ENCODE measurements at regions of chr1 and their contacts with region 1.

Region 1: GRCh38 chr1:212368073-212368484 is 46.6 kb downstream of the PACC1 start:
- DNase-seq: peak; percentile 67
- ATAC-seq: peak; percentile 98
- H3K4me3 Mint-ChIP-seq: no peak overlapping the region
- H3K27ac Mint-ChIP-seq: no peak overlapping the region
- H3K4me1 Mint-ChIP-seq: no peaks in the 10 kb centered on the region
- H3K27me3 Mint-ChIP-seq: no peaks in the 10 kb centered on the region

Region 2: DNA sequence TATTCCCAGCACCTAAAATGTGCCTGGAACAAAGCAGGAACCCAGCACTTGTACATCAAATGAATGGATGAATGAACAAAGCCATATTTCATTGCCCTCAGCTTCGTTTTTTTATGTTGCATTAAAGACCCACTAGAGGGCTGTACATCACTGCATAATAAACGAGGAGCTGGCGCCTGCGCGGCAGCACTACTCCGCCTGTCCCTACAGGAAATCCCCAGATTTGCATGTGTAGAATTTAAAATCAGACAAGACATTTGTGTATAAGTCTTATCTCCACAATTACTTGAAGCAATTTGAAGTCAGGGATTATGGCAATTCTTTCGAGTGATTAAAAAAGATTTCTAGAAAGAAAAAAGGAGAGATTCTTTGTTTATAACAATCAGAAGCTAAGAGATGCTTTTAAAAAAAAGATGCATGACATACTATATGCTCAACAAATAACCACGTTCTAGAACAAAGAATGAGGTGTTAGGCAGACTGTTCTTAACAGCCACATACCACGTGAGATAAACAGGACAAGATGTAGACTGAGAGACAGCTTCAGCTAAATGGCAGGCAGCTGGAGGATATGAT is 687.2 kb before region 1 on chr1:
- CTCF ChIA-PET with region 1: interaction called, 7 read pairs
- POLR2A ChIA-PET with region 1: no interaction called
- intact Hi-C with region 1: loop called (anchors 2 to 5 kb)
- DNase-seq: peak; percentile 85
- ATAC-seq: peak; percentile 94
- H3K4me3 Mint-ChIP-seq: no peak overlapping the region
- H3K27ac Mint-ChIP-seq: peak overlapping the region; percentile 71
- H3K4me1 Mint-ChIP-seq: peaks cover 7% of the 10 kb centered on the region
- H3K27me3 Mint-ChIP-seq: no peaks in the 10 kb centered on the region

Region 3: DNA sequence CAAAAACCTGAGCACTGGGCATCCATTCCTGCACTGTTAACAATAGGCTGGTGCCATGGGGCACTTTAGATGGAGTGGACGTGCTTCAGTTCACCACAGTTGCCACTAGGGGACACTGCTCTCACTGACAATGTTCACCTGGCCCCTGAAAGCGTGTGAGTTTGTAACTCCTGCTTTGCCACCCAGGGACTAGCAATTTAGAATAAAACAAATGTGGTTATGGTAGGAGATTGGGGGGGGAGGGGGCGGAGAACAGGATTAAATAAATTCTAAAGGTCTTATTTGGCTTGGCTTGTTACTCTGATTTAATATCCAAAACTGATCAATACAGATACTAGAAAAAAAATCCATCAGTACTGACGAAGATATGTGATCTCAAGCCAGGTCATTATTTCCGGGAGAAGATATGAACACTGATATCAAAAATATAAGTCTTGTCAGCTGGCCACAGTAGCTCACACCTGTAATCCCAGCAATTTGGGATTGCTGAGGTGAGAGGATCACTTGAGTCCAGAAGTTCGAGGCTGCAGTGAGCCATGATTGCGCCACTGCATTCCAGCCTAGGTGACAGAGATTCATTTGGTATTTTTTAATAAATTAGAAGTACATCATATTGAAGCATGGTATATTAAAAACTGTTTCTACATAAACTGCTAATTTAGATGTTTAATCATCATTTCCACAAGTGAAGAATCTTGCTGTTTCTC is 355.9 kb before region 1 on chr1:
- CTCF ChIA-PET with region 1: interaction called, 6 read pairs
- POLR2A ChIA-PET with region 1: no interaction called
- intact Hi-C with region 1: loop called (anchors 1 to 5 kb)
- DNase-seq: peak; percentile 80
- ATAC-seq: peak; percentile 99
- H3K4me3 Mint-ChIP-seq: no peak overlapping the region
- H3K27ac Mint-ChIP-seq: no peak overlapping the region
- H3K4me1 Mint-ChIP-seq: no peaks in the 10 kb centered on the region
- H3K27me3 Mint-ChIP-seq: no peaks in the 10 kb centered on the region

Region 4: DNA sequence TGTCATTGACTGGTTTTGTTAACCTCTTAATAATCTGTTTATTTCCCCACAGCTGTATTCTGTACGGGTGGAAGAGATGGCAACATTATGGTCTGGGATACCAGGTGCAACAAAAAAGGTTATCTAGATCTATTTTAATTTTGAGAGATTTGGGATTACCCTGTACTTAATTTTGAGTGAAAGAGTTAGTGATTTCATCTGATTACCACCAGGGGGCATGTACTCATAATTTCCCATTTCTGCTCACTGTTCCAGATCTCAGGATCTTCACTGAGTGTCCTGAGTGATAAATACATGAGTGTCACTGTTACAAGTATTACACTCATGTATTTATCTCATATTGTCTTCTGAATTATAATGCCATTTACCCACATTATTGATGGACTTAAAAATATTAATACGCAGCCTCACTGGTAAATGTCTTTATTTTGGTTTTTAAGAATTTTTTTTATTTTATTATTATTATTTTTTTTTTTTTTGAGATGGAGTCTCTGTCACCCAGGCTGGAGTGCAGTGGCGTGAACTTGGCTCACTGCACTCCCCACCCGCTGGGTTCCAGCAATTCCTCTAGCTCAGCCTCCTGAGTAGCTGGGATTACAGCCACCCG is 305.1 kb before region 1 on chr1:
- CTCF ChIA-PET with region 1: interaction called, 26 read pairs
- POLR2A ChIA-PET with region 1: no interaction called
- intact Hi-C with region 1: loop called in 1 of 2 experiments (anchors 1 kb)
- DNase-seq: no peak
- ATAC-seq: no peak
- H3K4me3 Mint-ChIP-seq: no peak overlapping the region
- H3K27ac Mint-ChIP-seq: no peak overlapping the region
- H3K4me1 Mint-ChIP-seq: no peaks in the 10 kb centered on the region
- H3K27me3 Mint-ChIP-seq: no peaks in the 10 kb centered on the region

Region 5: DNA sequence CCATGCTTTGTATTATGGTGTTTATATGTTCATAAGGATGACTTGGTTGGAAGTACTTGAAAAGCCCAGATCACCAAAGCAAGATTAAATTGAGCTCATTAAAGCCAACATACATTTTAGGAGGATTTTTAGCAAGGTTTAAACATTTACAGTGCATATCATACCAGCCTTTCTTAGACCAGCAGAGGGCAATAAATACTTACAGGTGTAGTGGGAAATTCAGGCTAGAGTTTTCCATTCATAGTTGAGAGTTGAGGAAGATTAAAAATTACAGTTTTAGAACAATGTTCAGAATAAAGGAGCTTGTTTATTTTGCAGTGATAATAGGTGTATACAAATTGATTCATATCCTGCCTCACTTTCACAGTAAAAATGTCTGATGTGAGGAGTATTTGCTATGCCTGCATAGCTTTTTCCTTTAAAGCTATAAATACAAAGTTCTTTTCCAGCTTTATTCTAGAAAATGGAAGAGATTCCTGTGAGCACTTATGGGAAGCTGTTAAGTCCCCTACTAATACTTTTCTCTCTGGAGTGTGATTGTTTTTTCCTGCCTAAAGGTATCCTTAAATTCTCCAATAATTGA is 297.3 kb before region 1 on chr1:
- CTCF ChIA-PET with region 1: interaction called, 20 read pairs
- POLR2A ChIA-PET with region 1: no interaction called
- intact Hi-C with region 1: loop called (anchors 1 kb)
- DNase-seq: no peak
- ATAC-seq: no peak
- H3K4me3 Mint-ChIP-seq: no peak overlapping the region
- H3K27ac Mint-ChIP-seq: no peak overlapping the region
- H3K4me1 Mint-ChIP-seq: no peaks in the 10 kb centered on the region
- H3K27me3 Mint-ChIP-seq: no peaks in the 10 kb centered on the region

Region 6: GRCh38 chr1:212158912-212159796 is 208.9 kb before region 1 on chr1:
- CTCF ChIA-PET with region 1: interaction called, 3 read pairs
- POLR2A ChIA-PET with region 1: no interaction called
- intact Hi-C with region 1: loop called in 1 of 2 experiments (anchors 2 kb)
- DNase-seq: peak; percentile 34
- ATAC-seq: peak; percentile 42
- H3K4me3 Mint-ChIP-seq: no peak overlapping the region
- H3K27ac Mint-ChIP-seq: peak overlapping the region; percentile 5
- H3K4me1 Mint-ChIP-seq: peaks cover 31% of the 10 kb centered on the region
- H3K27me3 Mint-ChIP-seq: no peaks in the 10 kb centered on the region

Region 7: DNA sequence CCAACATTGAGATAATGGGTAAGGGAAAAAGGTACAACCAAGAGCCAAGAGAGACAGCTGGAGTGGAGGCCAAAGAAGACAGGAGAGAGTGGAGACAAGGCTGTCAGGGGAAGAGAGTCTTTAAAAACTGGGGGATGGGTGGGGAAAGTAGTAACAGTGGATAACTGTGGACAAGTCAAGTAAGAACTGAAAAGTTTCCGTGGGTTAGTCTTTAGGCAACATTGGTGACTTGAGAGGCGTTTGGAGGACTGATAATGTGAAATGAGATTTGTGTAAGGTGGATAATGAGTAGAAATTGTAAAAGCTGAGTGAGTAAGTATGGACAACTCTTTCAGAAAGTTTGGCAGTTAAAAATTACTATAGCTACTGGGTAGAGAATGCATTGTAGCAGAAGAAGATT is 72.5 kb before region 1 on chr1:
- CTCF ChIA-PET with region 1: interaction called, 11 read pairs
- POLR2A ChIA-PET with region 1: no interaction called
- intact Hi-C with region 1: no loop called
- DNase-seq: no peak
- ATAC-seq: peak; percentile 71
- H3K4me3 Mint-ChIP-seq: no peak overlapping the region
- H3K27ac Mint-ChIP-seq: peak overlapping the region; percentile 10
- H3K4me1 Mint-ChIP-seq: peaks cover 73% of the 10 kb centered on the region
- H3K27me3 Mint-ChIP-seq: no peaks in the 10 kb centered on the region

Region 8: DNA sequence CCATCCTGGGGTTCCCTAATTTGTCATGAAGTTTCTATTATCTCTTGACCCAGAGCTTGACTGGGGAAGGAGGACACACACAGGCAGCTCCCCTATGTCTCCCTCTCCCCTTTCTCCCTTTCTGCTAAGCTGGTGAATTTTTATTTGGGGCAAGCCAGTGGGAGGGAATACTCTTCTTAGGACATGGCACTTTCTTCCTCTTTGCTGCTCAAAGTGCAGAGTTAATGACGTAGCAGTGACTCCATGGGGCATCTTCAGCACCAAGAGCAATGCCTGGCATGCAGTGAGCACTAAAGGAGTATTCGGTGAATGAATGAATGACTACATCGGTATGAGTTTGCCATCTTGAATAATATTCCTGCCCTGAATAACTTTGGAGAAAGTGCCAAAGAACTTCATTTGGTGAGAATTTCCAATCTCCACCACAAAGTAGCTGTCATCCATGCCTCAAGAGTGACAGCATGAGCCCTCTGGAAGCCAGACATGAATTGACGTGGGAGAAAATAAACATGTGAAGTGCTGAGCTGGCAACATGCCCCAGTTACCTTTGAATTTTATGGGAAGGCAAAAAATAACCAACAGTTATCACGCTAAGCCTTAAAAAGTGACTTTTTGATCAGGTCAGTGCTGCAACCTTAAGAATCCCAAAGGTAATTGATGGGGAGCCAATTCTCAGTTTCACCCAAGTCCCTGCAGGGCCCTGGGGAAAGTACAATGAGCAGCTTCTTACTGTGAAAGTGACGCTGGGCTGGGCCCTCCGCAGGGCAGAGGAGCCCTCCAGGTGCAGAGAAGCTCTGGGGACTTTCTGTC is 218.3 kb after region 1 on chr1:
- CTCF ChIA-PET with region 1: no interaction called
- POLR2A ChIA-PET with region 1: no interaction called
- intact Hi-C with region 1: no loop called
- DNase-seq: no peak
- ATAC-seq: no peak
- H3K4me3 Mint-ChIP-seq: no peak overlapping the region
- H3K27ac Mint-ChIP-seq: no peak overlapping the region
- H3K4me1 Mint-ChIP-seq: no peaks in the 10 kb centered on the region
- H3K27me3 Mint-ChIP-seq: peaks cover 27% of the 10 kb centered on the region

Measured in activated CD4-positive, alpha-beta T cell treated with anti-CD3 and anti-CD28 coated beads for 36 hours (primary cell).